Heart left ventricle (tissue), 16 donors: ENCODE measurements at regions of chr19 and their contacts with region 1.

Region 1: GRCh38 chr19:58002384-58003173 is at the start of gene ZNF606:
- DNase-seq: peak; percentile 91 to 95 (median 93)
- ATAC-seq: peak; percentile 97 to 99 (median 98)
- H3K4me3 ChIP-seq: peak within 1 kb of the TSS; percentile 61 to 100 (median 88)
- H3K27ac ChIP-seq: peak within 1 kb of the TSS; percentile 85 to 99 (median 93)
- H3K4me1 ChIP-seq: peaks cover 0 to 37% (median 24%) of the 10 kb centered on the region in 12 donors
- H3K27me3 ChIP-seq: no peaks in the 10 kb centered on the region
- CTCF ChIP-seq: no peak
- POLR2A ChIP-seq: peak in 1 of 2 donors; percentile 83
- total RNA-seq, gene ZNF606: 7.8 to 14.3 (median 12.2) TPM

Region 2: DNA sequence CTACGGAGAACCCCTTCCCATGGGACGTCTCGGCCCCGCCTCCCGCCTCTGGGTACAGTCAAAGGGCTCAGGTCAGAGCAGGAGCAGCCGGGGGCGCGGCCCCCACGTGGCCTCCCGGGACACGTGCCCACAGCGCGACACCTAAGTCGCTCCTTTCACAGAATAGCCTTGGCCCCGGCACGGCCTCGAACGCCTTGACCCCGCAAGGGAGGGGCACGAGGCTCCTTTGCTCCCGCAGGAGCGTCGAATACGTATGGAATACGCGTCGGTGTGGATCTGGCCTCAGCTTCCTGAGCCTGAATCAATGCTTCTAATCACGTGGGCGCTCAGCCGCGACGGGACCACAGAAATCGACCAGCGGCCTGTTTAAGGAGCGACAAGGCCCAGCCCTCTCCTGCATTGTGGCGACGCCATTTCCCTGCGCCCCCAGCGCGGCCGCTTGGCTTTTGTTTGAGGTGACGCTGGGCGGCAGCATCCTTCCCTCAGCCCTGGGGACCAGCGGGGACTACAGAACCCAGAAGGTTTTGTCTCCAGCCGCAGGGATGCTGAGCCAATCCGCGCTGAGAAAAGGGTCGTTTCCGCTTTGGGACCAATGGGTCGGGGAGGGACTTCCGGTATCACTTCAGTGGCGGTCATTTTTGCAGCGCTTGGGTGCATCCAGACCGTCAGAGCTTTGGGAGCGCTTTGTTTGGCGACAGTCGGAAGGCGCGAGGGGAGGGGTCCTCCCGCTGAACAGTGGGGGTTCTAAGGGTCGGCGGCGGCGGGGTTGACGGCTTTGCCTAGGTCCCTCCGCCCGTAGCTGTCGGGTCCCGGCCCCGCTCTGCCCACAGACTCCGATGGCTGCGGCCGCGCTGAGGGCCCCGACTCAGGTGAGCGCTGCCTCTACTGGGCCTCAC is 418.8 kb before region 1 on chr19 and contains the start of gene ZIK1:
- intact Hi-C with region 1: loop called in 1 of 10 experiments (anchors 10 kb)
- DNase-seq: peak; percentile 93 to 96 (median 95)
- ATAC-seq: peak; percentile 94 to 97 (median 96)
- H3K4me3 ChIP-seq: peak within 1 kb of the TSS; percentile 32 to 90 (median 80)
- H3K27ac ChIP-seq: peak within 1 kb of the TSS in 11 of 12 donors; percentile 41 to 84 (median 70)
- H3K4me1 ChIP-seq: peaks cover 0 to 29% (median 18%) of the 10 kb centered on the region in 12 donors
- H3K27me3 ChIP-seq: no peaks in the 10 kb centered on the region
- CTCF ChIP-seq: peak in 4 of 12 donors; percentile 23 to 44 (median 36)
- POLR2A ChIP-seq: peak in 1 of 2 donors; percentile 56
- total RNA-seq, gene ZIK1: 2.7 to 5.6 (median 4.4) TPM

Region 3: GRCh38 chr19:57947208-57948134 is 55.1 kb before region 1 on chr19 and contains the start of gene ZNF256:
- intact Hi-C with region 1: loop called in 1 of 10 experiments (anchors 2 kb)
- DNase-seq: peak; percentile 96 to 98 (median 97)
- ATAC-seq: peak; percentile 99
- H3K4me3 ChIP-seq: peak within 1 kb of the TSS; percentile 70 to 100 (median 98)
- H3K27ac ChIP-seq: peak within 1 kb of the TSS; percentile 42 to 95 (median 90)
- H3K4me1 ChIP-seq: peaks cover 0 to 24% (median 12%) of the 10 kb centered on the region in 12 donors
- H3K27me3 ChIP-seq: no peaks in the 10 kb centered on the region
- CTCF ChIP-seq: peak; percentile 61 to 93 (median 77)
- POLR2A ChIP-seq: peak in 1 of 2 donors; percentile 56
- total RNA-seq, gene ZNF256: 5.1 to 13.4 (median 9.7) TPM

Region 4: GRCh38 chr19:58059003-58059670 is 56.6 kb after region 1 on chr19 and contains the start of gene ZNF135:
- intact Hi-C with region 1: loop called in 1 of 10 experiments (anchors 1 kb)
- DNase-seq: peak; percentile 93 to 95 (median 94)
- ATAC-seq: peak; percentile 95 to 97 (median 97)
- H3K4me3 ChIP-seq: peak within 1 kb of the TSS; percentile 47 to 95 (median 72)
- H3K27ac ChIP-seq: peak within 1 kb of the TSS; percentile 78 to 100 (median 95)
- H3K4me1 ChIP-seq: peaks cover 0 to 25% (median 11%) of the 10 kb centered on the region in 12 donors
- H3K27me3 ChIP-seq: no peaks in the 10 kb centered on the region
- CTCF ChIP-seq: no peak
- POLR2A ChIP-seq: peak in 1 of 2 donors; percentile 31
- total RNA-seq, gene ZNF135: 2.1 to 4.5 (median 3.4) TPM